Mammary epithelial cell (primary cell): ENCODE measurements at regions of chr2 and their contacts with region 1.

Region 1: GRCh38 chr2:197113275-197113711 is 186.8 kb upstream of the PGAP1 start:
- DNase-seq: peak; percentile 6
- H3K4me3 ChIP-seq: no peak overlapping the region
- H3K27ac ChIP-seq: no peak overlapping the region
- H3K4me1 ChIP-seq: no peaks in the 10 kb centered on the region
- H3K27me3 ChIP-seq: no peaks in the 10 kb centered on the region
- CTCF ChIP-seq: peak; percentile 47 to 53

Region 2: DNA sequence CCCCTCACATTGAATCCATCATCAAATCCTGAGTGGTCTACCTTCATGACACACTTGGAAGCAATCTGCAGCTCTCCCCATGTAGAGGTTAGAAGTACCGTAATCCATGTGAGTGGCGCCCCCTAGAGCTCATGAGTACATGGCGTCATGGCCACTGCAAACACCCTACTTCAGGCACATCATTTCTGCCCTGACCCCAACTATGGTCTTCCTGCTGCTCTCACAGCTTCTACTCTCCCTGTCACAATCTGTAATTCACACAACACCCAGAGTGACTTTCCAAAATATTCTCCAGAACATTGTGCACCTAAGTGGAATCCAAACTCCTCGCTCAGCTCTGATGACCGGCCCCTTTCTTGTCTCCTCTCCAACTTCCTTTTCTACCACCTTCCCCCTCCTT is 55.4 kb after region 1 on chr2:
- CTCF ChIA-PET with region 1: no interaction called
- dilution Hi-C with region 1: no loop called
- in situ Hi-C with region 1: no loop called
- intact Hi-C with region 1: loop called (anchors 1 kb)
- DNase-seq: no peak
- H3K4me3 ChIP-seq: no peak overlapping the region
- H3K27ac ChIP-seq: no peak overlapping the region
- H3K4me1 ChIP-seq: no peaks in the 10 kb centered on the region
- H3K27me3 ChIP-seq: no peaks in the 10 kb centered on the region
- CTCF ChIP-seq: peak; percentile 71

Region 3: DNA sequence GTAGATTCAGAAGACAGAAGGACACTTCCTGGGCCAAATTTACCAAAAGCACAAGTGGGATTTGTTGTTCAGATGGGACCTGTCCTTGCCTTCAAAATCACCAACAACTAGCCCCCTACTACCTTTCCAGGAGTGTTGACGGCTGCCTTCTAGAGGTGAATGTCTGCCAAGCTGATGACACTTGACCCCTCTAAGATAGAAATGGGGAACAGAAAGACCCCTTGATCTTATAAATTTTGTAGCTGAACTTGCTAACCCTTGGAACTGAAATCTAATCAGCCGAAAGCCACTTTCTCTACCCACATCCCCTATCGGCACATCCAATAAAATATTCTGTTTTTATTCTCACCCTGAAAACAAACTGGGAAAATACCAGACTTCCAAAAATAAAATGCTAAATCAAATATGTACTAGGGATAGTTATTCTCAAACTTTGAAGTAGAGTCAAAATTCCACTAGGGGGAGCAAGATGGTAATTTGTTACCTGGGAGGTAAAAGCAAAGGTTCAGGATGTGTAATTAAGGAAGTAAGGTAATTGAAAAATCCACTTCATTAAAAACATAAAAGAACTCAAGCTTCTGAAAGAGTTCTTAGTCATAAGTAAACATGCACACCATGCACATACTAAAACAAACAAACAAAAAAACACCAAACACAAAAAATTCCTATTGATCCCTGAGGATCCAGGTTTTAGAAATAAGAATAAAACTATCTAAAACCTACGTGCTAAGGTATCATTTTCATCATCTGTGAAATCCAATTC is 78.1 kb after region 1 on chr2:
- CTCF ChIA-PET with region 1: no interaction called
- dilution Hi-C with region 1: no loop called
- in situ Hi-C with region 1: no loop called
- intact Hi-C with region 1: loop called (anchors 5 kb)
- DNase-seq: peak; percentile 32
- H3K4me3 ChIP-seq: no peak overlapping the region
- H3K27ac ChIP-seq: no peak overlapping the region
- H3K4me1 ChIP-seq: no peaks in the 10 kb centered on the region
- H3K27me3 ChIP-seq: no peaks in the 10 kb centered on the region
- CTCF ChIP-seq: peak; percentile 62 to 67

Region 4: DNA sequence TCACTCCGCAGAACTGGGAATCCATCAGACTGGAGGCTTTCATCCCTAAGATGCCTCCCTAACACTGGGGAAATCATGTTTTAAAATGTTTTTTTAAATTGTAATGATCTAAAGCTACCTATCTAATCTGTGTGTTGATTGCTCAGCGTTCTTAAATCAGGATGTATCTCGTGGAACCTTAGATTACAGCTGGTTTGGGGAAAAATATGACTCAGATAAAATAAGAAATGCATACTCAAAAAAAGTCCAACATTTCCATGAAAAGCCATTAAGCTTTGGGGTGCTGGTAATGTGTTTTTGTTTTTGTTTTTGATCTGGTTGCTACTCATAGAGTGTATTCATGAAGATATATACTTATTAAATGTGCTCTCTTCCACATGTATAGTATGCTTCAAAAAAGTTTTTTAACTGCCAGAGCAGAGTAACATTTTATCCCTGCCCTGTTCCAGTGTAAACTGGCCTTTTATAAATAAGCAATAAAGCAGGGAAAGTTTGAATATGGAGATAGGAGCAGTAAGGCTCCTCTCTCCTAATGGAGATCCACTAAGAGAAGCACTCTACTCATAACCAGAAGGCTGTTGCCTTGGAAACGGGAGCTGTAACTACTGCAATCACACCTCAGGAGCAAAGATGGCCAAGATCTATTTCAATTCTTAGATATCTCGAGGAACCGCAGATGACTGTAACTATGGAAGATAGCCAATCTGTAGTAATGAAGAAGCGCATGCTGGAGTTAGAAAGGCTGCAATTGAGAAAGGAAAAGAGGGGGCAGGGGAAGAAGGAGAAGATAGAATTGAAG is 155.7 kb after region 1 on chr2:
- CTCF ChIA-PET with region 1: no interaction called
- dilution Hi-C with region 1: no loop called
- in situ Hi-C with region 1: no loop called
- intact Hi-C with region 1: no loop called
- DNase-seq: peak; percentile 48
- H3K4me3 ChIP-seq: no peak overlapping the region
- H3K27ac ChIP-seq: no peak overlapping the region
- H3K4me1 ChIP-seq: no peaks in the 10 kb centered on the region
- H3K27me3 ChIP-seq: no peaks in the 10 kb centered on the region
- CTCF ChIP-seq: no peak

Region 5: GRCh38 chr2:197383823-197384222 is 270.5 kb after region 1 on chr2:
- CTCF ChIA-PET with region 1: interaction called, 4 read pairs
- dilution Hi-C with region 1: no loop called
- in situ Hi-C with region 1: loop called in 1 of 2 experiments (anchors 10 kb)
- intact Hi-C with region 1: no loop called
- DNase-seq: no peak
- H3K4me3 ChIP-seq: no peak overlapping the region
- H3K27ac ChIP-seq: no peak overlapping the region
- H3K4me1 ChIP-seq: no peaks in the 10 kb centered on the region
- H3K27me3 ChIP-seq: no peaks in the 10 kb centered on the region
- CTCF ChIP-seq: no peak